ENCODE measurements at regions of chr7 and their contacts with region 1.

Region 1: GRCh38 chr7:80060218-80060806 is 74.3 kb upstream of the GNAI1 start:
- DNase-seq: peak; percentile 20
- CTCF ChIP-seq: peak; percentile 47

Region 2: GRCh38 chr7:80036107-80036506 is 24.2 kb before region 1 on chr7:
- CTCF ChIA-PET with region 1: no interaction called
- POLR2A ChIA-PET with region 1: no interaction called
- DNase-seq: no peak
- CTCF ChIP-seq: no peak

Region 3: GRCh38 chr7:80047856-80048459 is 12.4 kb before region 1 on chr7:
- CTCF ChIA-PET with region 1: interaction called, 18 read pairs
- POLR2A ChIA-PET with region 1: no interaction called
- DNase-seq: no peak
- CTCF ChIP-seq: no peak